WTC11 (cell line): ENCODE measurements at regions of chr6 and their contacts with region 1.

Region 1: DNA sequence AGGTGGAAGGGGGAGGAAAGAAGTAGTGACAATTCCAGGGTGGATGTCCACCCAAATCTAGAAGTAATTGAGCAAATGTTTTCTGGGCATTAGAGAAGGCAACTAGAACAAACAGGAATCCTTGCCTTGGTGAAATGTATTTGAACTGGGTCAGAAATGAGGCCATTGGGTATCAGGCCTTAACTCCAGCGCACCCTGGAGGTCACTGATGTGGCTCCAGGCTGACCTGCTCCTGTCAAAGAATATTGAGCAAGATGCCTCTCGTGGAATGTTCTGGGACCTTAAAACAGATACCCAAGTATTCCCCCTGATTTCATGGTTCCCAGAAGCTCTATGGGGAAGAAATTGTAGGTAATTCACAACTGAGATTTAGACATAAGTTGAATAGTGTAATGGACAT is 6.9 kb downstream of the HLA-DPB1 start:
- DNase-seq: peak; percentile 51
- ATAC-seq: peak; percentile 38
- H3K4me3 Mint-ChIP-seq: peak overlapping the region; percentile 9; the same call in 1 of the 2 replicates
- H3K27ac Mint-ChIP-seq: peak overlapping the region; percentile 51; the same call in 1 of the 2 replicates
- H3K4me1 Mint-ChIP-seq: peaks cover 31% of the 10 kb centered on the region
- H3K27me3 Mint-ChIP-seq: peaks cover 18% of the 10 kb centered on the region
- CTCF ChIP-seq: peak; percentile 26; the same call in 1 of the 2 replicates

Region 2: DNA sequence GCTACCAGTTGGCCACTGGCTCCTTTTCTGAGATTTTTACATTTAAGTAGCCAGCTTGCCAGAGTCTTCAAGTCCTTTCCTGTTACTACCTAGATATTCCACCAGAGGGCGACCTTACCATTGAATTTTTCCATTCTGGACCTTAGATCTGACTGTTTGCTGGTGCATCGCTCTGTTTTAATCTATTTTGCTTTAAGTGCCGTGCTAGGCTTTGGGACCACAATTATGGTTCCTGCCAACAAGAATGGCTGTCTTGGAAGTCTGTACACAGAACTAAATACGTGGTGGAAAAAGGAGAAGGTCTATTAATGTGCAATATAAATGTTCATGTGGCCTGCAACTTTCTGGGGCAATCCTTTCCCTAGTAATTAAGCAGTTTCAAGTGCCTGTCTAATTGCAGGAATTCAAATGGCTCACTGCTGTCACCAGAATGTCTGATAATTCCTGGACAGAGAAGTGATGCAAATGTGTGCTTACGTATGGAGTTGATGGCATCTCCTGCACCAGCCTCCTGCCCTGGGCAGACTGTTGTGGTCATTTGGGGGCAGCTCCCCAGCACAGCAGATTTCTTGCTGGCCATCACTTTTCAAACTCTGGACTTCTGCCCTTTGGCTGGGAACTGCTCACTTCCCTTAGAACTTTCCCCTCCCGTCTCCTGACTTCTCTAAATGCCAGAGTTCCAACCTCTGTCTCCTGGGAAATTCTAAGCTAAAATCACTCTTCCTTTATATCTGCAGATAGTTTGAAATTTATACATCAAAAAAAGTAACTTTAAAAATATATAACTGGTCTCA is 67.7 kb before region 1 on chr6:
- CTCF ChIA-PET with region 1: interaction called, 68 read pairs
- POLR2A ChIA-PET with region 1: interaction called, 5 read pairs
- DNase-seq: no peak
- ATAC-seq: peak; percentile 68
- H3K4me3 Mint-ChIP-seq: no peak overlapping the region
- H3K27ac Mint-ChIP-seq: no peak overlapping the region
- H3K4me1 Mint-ChIP-seq: peaks cover 51% of the 10 kb centered on the region
- H3K27me3 Mint-ChIP-seq: no peaks in the 10 kb centered on the region
- CTCF ChIP-seq: peak; percentile 68

Region 3: DNA sequence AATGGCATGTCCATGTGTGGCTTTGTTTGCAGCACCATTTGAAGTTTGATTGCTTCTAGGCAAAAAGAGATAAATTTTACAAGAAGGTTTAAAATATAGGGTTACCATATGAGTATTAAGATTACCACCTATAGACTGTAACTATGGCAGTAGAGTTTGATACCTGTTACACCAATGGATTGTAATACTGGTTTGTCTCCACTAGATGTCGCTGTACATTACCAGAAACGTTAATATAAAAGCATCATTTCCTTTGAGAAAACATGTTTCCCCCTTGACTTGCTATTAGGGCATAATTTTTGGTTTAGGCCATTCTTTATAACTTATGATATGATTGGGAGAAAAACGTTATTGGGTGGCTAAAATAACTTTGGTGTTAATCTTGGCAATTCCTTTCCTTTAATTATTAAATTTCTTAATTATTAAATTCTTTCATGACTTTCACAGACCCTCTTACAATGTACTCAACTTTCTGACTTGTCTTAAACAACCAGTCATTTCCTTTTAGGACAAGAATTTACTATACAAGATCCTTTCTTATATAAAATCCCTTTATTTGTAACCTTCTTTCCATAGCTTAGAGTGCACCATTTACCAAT is 35.9 kb after region 1 on chr6:
- CTCF ChIA-PET with region 1: interaction called, 41 read pairs
- POLR2A ChIA-PET with region 1: interaction called, 13 read pairs
- DNase-seq: no peak
- ATAC-seq: no peak
- H3K4me3 Mint-ChIP-seq: peak overlapping the region; percentile 98
- H3K27ac Mint-ChIP-seq: peak overlapping the region; percentile 100
- H3K4me1 Mint-ChIP-seq: peaks cover 76% of the 10 kb centered on the region
- H3K27me3 Mint-ChIP-seq: peaks cover 2% of the 10 kb centered on the region; the same call in 1 of the 2 replicates
- CTCF ChIP-seq: peak; percentile 89

Region 4: DNA sequence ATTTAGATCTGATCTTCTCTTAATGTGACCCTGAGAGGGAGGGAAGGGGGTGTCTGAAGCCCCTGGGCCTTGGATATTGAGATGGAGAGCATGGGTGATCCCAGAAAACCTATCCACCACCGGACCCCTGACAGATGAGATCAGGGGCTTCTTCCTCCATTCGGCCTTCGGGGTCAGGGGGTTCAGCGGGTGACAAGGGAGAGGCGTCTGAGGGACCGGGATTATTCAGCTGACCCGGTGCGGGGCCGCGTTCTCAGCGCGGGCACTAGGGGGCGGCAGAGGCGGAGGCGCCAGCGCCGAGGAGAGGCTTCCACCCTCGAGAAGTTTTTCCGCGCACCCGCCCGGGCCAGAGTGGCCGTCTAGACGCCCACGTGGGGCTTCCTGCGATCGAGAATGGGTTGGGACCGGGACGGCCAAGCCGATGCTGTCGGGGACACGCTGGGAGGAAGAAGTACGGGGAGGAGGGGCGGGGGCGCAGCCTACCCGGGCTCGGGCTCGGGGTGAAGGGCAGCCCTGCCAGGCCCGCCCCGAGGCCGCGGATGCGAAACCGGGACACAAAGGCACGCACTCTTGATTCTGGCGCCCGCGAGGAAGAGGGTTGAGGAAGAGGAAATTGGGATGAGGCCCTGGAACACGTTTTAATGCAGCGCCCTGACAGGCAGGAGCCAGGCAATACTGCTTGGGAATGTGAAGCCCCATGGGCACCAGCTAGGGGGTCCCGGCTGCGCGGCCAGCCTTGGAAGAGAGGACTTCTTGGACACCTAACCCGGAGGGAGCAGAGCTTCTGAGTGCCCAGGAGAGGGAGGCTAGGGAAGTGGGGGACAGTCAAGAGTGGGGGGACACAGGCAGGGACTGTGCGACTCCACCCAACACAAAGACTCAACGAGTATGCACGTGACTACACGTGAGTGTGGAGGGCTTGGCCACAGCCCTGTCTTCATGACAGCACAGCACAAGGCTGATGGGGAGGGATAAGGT is 78.9 kb after region 1 on chr6:
- CTCF ChIA-PET with region 1: interaction called, 11 read pairs
- POLR2A ChIA-PET with region 1: no interaction called
- DNase-seq: peak; percentile 86
- ATAC-seq: peak; percentile 83
- H3K4me3 Mint-ChIP-seq: peak overlapping the region; percentile 86
- H3K27ac Mint-ChIP-seq: no peak overlapping the region
- H3K4me1 Mint-ChIP-seq: peaks cover 22% of the 10 kb centered on the region
- H3K27me3 Mint-ChIP-seq: peaks cover 25% of the 10 kb centered on the region
- CTCF ChIP-seq: peak; percentile 86